AG04450 (cell line): ENCODE measurements at regions of chr18 and their contacts with region 1.

Region 1: GRCh38 chr18:63511286-63511685 is 30.9 kb upstream of the SERPINB12 start:
- DNase-seq: peak; percentile 6
- H3K4me3 ChIP-seq: no peak overlapping the region
- H3K27ac ChIP-seq: no peak overlapping the region
- H3K27me3 ChIP-seq: peaks cover 8% of the 10 kb centered on the region
- CTCF ChIP-seq: peak; percentile 80

Region 2: DNA sequence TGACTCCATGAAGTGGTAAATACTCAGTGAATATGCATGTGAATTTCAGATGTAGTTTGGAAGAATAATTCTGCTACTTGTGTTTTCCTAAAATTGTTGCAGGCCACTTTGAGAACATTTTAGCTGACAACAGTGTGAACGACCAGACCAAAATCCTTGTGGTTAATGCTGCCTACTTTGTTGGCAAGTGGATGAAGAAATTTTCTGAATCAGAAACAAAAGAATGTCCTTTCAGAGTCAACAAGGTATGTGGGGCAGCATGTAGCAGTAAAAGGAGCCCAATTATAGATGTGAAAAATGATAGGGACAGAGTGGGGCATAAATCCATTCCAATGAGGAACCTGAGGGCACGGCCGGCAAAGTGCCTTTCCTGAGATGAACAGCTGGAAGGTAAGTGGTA is 18.4 kb before region 1 on chr18:
- CTCF ChIA-PET with region 1: interaction called, 13 read pairs
- POLR2A ChIA-PET with region 1: no interaction called
- DNase-seq: no peak
- H3K4me3 ChIP-seq: no peak overlapping the region
- H3K27ac ChIP-seq: no peak overlapping the region
- H3K27me3 ChIP-seq: peaks cover 8% of the 10 kb centered on the region
- CTCF ChIP-seq: no peak

Region 3: GRCh38 chr18:63523660-63524059 is 12.4 kb after region 1 on chr18:
- CTCF ChIA-PET with region 1: interaction called, 96 read pairs
- POLR2A ChIA-PET with region 1: no interaction called
- DNase-seq: no peak
- H3K4me3 ChIP-seq: no peak overlapping the region
- H3K27ac ChIP-seq: no peak overlapping the region
- H3K27me3 ChIP-seq: peaks cover 3% of the 10 kb centered on the region
- CTCF ChIP-seq: no peak

Region 4: DNA sequence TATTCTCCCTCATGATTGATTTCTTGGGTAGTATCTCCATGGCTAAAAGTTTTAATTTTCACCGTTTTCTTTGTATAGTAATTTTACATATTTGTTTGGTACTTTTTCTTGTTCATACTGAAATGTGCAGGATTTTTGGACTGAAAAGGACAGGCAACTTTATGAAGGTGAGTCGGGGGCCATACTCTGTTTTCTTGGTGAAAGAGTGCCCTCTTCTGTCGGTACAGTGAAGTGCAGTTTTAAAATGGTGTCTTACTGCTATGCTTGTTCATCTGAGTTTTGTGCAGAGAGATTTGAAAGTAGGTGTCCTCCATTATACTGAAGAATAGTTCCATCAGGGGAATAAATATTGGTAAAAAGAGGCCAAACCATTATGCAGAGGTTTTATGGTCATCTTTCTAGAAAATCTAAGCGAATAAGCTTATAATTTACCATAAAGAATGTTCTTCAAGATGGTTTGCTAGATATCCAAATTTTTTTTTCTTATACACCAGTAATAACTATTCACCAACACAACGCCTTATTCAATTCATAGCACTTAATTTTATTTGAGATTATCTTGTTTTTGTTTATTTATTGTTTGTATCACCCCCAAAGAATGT is 67.2 kb after region 1 on chr18:
- CTCF ChIA-PET with region 1: interaction called, 238 read pairs
- POLR2A ChIA-PET with region 1: no interaction called
- DNase-seq: no peak
- H3K4me3 ChIP-seq: no peak overlapping the region
- H3K27ac ChIP-seq: no peak overlapping the region
- H3K27me3 ChIP-seq: no peaks in the 10 kb centered on the region
- CTCF ChIP-seq: peak; percentile 68

Region 5: DNA sequence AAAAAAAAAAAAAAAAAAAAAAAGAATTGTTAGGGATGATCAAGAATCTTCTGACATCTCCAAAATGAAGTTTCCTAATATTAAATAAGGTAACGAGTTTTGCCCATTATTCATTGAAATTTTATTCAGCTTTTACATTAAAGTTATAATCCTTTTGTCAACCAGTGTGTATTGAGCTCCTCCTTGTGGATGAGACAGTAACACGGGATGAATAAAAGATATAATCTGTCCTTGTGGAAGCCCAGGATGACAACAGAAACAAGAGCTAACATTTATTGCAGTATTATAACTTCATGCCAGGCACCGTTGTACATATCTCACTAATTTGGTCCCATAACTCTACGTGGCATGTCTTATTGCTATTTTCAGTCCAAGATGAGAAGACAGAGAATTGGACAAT is 230.5 kb after region 1 on chr18:
- CTCF ChIA-PET with region 1: interaction called, 246 read pairs
- POLR2A ChIA-PET with region 1: interaction called, 5 read pairs
- DNase-seq: no peak
- H3K4me3 ChIP-seq: no peak overlapping the region
- H3K27ac ChIP-seq: no peak overlapping the region
- H3K27me3 ChIP-seq: no peaks in the 10 kb centered on the region
- CTCF ChIP-seq: peak; percentile 69

Region 6: DNA sequence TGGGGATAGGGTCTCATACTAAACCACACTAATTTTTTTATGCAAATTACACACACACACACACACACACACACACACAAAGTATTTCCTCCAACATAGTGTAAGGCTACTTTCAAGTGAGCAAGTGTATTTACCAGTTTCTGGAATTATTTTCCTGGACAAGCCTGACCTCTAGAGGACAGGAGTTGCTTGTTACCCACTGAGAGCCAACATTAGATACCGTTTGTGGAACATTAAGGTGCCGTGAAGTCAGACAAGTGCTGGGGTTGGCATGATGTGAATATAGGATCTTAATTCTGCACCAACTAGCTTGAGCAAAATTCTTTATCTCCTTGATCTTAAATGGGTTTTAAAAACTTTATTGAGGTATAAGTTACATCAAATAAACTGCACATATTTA is 336.9 kb after region 1 on chr18:
- CTCF ChIA-PET with region 1: interaction called, 272 read pairs
- POLR2A ChIA-PET with region 1: no interaction called
- DNase-seq: peak; percentile 37
- H3K4me3 ChIP-seq: no peak overlapping the region
- H3K27ac ChIP-seq: no peak overlapping the region
- H3K27me3 ChIP-seq: no peaks in the 10 kb centered on the region
- CTCF ChIP-seq: peak; percentile 74

Region 7: GRCh38 chr18:63979409-63979920 is 468.2 kb after region 1 on chr18:
- CTCF ChIA-PET with region 1: interaction called, 11 read pairs
- POLR2A ChIA-PET with region 1: no interaction called
- DNase-seq: peak; percentile 21
- H3K4me3 ChIP-seq: peak overlapping the region; percentile 48
- H3K27ac ChIP-seq: no peak overlapping the region
- H3K27me3 ChIP-seq: no peaks in the 10 kb centered on the region
- CTCF ChIP-seq: peak; percentile 78